ENCODE measurements at regions of chr1 and their contacts with region 1.

Region 1: DNA sequence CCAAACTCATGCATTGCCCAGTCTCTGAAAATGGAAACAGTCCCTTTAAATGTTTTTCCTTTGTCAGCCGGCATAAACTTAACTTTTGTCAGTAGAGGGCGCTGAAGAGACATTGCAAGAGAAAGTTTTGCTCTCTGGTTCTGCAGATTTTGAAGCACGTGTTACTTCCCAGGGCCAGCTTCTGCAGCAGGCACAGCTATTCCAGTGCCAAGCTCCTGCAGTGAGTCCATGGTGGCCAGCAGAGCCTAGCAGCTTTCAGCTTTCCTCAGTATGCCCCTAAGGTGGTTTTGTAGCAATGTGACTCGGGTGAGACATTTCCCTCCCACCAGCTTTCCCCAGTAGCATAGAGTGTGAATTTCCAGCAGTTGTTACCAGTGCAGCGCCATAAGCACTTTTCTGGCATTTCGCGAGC is 2.6 kb upstream of the IFI44L start:
- DNase-seq: peak; percentile 39 to 56
- H3K4me3 ChIP-seq: no peak overlapping the region
- H3K4me3 Mint-ChIP-seq: no peak overlapping the region
- H3K27ac Mint-ChIP-seq: no peak overlapping the region
- H3K4me1 ChIP-seq: no peaks in the 10 kb centered on the region
- H3K4me1 Mint-ChIP-seq: no peaks in the 10 kb centered on the region
- H3K27me3 ChIP-seq: no peaks in the 10 kb centered on the region
- H3K27me3 Mint-ChIP-seq: peaks cover 3% of the 10 kb centered on the region
- CTCF ChIP-seq: peak; percentile 43 to 56

Region 2: DNA sequence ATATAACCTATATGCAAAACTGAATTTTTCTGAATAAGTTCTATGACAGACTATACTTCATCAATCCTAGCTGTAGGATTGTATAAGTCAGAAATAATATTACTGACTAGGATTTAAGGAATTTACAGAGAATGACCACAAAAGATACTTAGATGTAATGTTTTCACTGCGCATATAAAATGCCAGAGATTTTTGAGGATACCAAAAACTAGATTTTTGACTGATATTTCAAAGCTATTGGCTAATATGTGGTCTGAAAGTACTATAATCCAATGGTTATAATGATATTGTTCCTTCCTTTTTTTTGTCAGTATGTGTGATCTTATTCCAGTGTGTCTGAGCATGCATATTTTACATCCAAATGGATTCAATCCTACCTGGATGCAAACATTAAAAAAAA is 14.4 kb before region 1 on chr1:
- CTCF ChIA-PET with region 1: no interaction called
- POLR2A ChIA-PET with region 1: no interaction called
- intact Hi-C with region 1: no loop called
- DNase-seq: no peak
- H3K4me3 ChIP-seq: no peak overlapping the region
- H3K4me3 Mint-ChIP-seq: no peak overlapping the region
- H3K27ac Mint-ChIP-seq: no peak overlapping the region
- H3K4me1 ChIP-seq: no peaks in the 10 kb centered on the region
- H3K4me1 Mint-ChIP-seq: no peaks in the 10 kb centered on the region
- H3K27me3 ChIP-seq: no peaks in the 10 kb centered on the region
- H3K27me3 Mint-ChIP-seq: no peaks in the 10 kb centered on the region
- CTCF ChIP-seq: no peak

Region 3: DNA sequence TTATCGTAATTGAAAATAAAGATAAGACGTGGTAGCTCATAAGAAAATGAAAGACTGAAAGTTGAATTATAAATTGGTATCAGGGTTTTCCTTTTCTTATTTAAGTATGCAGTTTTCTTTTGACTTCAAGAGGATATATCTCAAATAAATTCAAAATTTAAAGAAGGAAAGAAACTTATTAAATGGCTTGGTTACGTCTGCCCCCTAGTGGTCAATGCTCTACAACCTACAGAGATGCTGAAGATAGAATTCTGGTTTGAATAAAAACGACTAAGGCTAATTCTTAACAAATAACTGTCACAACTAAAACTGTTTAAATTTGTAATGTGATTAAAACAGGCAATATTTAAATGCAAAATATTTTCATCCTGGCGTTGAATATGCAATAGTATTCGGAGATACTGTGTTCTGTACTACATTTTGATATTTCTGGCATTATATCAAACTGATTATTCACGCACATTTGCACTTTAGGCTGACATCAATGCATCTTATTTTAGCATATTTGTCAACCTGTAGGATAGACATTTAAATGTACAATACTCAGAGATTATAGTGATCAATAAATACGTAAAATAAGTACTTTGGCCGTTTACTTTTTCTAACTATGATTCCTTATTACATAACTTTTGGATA is 58.8 kb after region 1 on chr1:
- CTCF ChIA-PET with region 1: no interaction called
- POLR2A ChIA-PET with region 1: no interaction called
- intact Hi-C with region 1: loop called (anchors 1 kb)
- DNase-seq: peak in 1 of 2 experiments; percentile 33
- H3K4me3 ChIP-seq: no peak overlapping the region
- H3K4me3 Mint-ChIP-seq: no peak overlapping the region
- H3K27ac Mint-ChIP-seq: no peak overlapping the region
- H3K4me1 ChIP-seq: no peaks in the 10 kb centered on the region
- H3K4me1 Mint-ChIP-seq: no peaks in the 10 kb centered on the region
- H3K27me3 ChIP-seq: no peaks in the 10 kb centered on the region
- H3K27me3 Mint-ChIP-seq: no peaks in the 10 kb centered on the region
- CTCF ChIP-seq: peak; percentile 43 to 59